Activated naive CD4-positive, alpha-beta T cell treated with anti-CD3 and anti-CD28 coated beads for 36 hours (primary cell): ENCODE measurements at regions of chr4 and their contacts with region 1.

Region 1: DNA sequence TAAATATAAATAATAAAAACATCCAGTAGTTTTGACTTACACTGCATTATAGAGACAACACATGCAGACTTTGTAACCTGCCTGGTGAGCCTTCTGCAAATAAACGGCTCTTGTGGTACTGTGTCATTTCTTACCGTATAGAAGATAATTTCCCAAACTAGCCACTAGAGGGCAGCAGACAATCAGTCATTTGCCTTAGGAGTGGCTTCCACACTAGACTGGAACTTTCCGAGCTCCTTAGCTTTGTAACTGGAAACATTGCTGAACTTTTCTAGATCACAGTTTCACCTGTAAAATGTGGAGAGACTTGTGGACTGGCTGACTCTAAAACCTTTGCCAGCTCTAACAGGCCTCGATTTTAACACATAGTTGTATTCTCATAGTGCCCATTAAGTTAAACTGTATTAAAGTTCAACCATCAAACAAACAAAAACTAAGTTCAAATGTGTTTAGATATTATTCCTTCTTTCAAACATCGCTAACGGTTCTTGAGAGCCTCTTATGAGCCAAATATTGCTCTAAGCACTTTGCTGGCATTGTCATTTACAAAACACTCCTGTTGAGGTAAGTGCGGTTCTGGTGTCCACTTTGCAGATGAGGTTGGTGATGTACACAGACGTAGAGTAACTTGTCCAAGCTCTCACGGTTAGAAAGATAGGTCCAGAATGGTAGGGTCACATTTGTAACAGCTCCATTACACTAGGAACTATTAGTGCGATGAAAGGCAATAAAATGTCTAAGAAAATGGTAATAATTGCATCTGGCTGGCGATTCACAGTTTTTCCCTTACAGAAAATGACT is 345.5 kb downstream of the ANK2 start:
- DNase-seq: peak; percentile 70
- H3K4me3 Mint-ChIP-seq: no peak overlapping the region
- H3K27ac Mint-ChIP-seq: no peak overlapping the region
- H3K4me1 Mint-ChIP-seq: no peaks in the 10 kb centered on the region
- H3K27me3 Mint-ChIP-seq: peaks cover 1% of the 10 kb centered on the region

Region 2: GRCh38 chr4:113049421-113050372 is 345.2 kb before region 1 on chr4 and contains the start of gene ANK2:
- CTCF ChIA-PET with region 1: no interaction called
- intact Hi-C with region 1: no loop called
- DNase-seq: no peak
- H3K4me3 Mint-ChIP-seq: no peak within 1 kb of the TSS
- H3K27ac Mint-ChIP-seq: no peak within 1 kb of the TSS
- H3K4me1 Mint-ChIP-seq: no peaks in the 10 kb centered on the region
- H3K27me3 Mint-ChIP-seq: peaks cover 8% of the 10 kb centered on the region
- total RNA-seq, gene ANK2: 2.7 to 3.0 TPM

Region 3: DNA sequence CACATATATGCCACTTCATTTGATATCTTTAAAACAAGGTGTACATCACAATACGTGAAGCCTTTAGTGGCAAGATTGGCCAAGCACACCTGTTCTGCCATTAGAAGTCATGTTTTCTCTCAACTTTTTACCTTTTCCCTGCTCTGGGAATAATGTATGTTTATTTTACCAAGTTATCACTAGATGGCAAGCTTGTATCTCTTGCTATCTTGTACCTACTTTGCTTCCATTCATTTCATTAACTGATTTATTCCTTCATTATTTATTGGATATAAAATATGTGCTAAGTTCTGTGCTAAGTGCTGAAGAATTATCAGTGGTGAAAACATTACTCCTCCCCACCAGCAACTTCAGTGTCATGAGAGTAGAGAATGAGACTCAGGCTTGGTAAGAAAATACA is 100.0 kb before region 1 on chr4:
- CTCF ChIA-PET with region 1: no interaction called
- intact Hi-C with region 1: loop called (anchors 5 kb)
- DNase-seq: no peak
- H3K4me3 Mint-ChIP-seq: no peak overlapping the region
- H3K27ac Mint-ChIP-seq: no peak overlapping the region
- H3K4me1 Mint-ChIP-seq: no peaks in the 10 kb centered on the region
- H3K27me3 Mint-ChIP-seq: peaks cover 12% of the 10 kb centered on the region

Region 4: DNA sequence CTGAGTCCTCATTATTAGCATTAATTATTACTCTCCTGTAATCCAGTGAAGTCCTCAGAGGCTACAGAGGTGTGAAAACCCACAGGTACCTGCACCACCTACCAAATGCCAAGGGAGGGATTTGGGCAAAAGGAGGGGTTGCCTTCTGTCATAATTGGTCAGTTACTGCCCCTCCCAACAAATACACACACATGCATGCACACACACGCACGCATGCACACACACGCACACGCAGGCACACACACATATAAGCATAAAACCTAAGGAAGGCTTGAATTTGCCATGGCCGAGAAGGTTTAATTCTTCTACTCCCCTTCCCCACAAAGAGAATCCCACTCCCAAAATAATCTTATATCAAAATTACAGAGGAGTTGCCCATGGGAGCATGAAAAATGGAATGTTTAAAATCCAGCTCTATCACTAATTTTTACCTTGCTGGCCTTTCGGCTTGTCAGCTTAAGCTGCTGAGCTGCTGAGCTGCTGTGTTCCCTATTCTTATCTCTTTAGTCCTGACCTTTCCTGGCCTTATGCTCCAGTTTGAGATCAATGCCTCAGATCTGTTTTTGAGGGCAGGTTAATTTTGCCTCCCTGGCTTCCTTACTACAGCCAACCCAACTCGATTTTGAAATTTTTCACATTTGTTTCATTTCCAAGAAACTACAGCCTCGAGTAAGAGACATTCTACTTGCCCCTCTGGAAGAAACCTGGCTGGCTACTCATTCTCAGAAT is 271.6 kb after region 1 on chr4:
- CTCF ChIA-PET with region 1: no interaction called
- intact Hi-C with region 1: no loop called
- DNase-seq: no peak
- H3K4me3 Mint-ChIP-seq: no peak overlapping the region
- H3K27ac Mint-ChIP-seq: no peak overlapping the region
- H3K4me1 Mint-ChIP-seq: peaks cover 6% of the 10 kb centered on the region
- H3K27me3 Mint-ChIP-seq: no peaks in the 10 kb centered on the region

Region 5: GRCh38 chr4:113823291-113823659 is 428.3 kb after region 1 on chr4:
- CTCF ChIA-PET with region 1: interaction called, 3 read pairs
- intact Hi-C with region 1: loop called (anchors 2 kb)
- DNase-seq: no peak
- H3K4me3 Mint-ChIP-seq: no peak overlapping the region
- H3K27ac Mint-ChIP-seq: no peak overlapping the region
- H3K4me1 Mint-ChIP-seq: peaks cover 66% of the 10 kb centered on the region
- H3K27me3 Mint-ChIP-seq: no peaks in the 10 kb centered on the region

Region 6: DNA sequence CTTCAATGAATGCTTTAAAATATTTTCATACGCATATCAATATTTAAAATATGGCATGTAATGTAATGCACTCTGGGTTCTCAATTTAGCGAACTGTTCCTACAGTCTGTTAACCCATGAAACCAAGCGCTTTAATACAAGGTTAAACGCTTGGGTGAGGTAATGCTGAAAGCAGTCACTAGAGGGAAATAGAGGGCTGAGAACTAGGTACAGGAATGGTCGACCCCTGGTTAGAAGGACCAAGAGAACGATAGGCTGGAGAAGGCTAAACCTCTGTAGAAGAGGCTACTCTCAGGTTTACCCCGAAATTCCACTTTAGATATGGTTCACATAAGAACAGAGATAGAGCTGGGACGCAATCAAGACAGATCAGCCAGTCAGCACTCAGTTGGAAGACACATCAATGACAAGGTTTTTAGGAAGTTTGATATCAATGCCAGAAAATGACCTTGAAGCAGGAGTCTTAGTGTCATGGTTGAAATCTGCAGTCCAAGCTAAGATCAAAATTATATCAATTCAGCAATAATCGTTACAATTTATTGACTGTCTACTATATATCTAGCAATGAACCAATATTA is 557.6 kb after region 1 on chr4:
- CTCF ChIA-PET with region 1: interaction called, 3 read pairs
- intact Hi-C with region 1: loop called (anchors 2 kb)
- DNase-seq: peak; percentile 27
- H3K4me3 Mint-ChIP-seq: no peak overlapping the region
- H3K27ac Mint-ChIP-seq: no peak overlapping the region
- H3K4me1 Mint-ChIP-seq: peaks cover 8% of the 10 kb centered on the region
- H3K27me3 Mint-ChIP-seq: no peaks in the 10 kb centered on the region

Region 7: DNA sequence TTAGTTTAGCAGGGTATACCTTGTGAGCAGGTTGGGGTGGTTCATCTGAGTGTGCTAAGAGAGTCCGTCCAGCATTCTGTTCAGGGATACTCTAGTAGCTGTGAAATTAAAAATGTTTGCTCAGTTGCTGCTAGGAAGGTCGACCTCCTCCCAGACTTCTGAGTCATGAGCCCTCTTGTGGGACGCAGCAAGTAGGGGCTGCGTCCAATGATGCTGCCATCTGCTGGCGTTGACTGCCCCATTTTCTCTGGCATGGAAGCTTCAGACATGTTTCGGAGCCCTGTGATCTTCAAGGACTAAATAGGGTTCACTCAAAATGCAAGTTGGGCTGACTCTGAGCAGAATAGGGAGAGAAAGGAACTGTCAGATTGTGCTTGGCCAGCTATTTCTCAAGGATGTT is 785.6 kb after region 1 on chr4:
- CTCF ChIA-PET with region 1: interaction called, 4 read pairs
- intact Hi-C with region 1: loop called (anchors 1 kb)
- DNase-seq: peak; percentile 56
- H3K4me3 Mint-ChIP-seq: no peak overlapping the region
- H3K27ac Mint-ChIP-seq: no peak overlapping the region
- H3K4me1 Mint-ChIP-seq: no peaks in the 10 kb centered on the region
- H3K27me3 Mint-ChIP-seq: no peaks in the 10 kb centered on the region

Region 8: GRCh38 chr4:114659386-114660008 is 1264.6 kb after region 1 on chr4:
- CTCF ChIA-PET with region 1: no interaction called
- intact Hi-C with region 1: loop called (anchors 2 kb)
- DNase-seq: peak; percentile 63
- H3K4me3 Mint-ChIP-seq: no peak overlapping the region
- H3K27ac Mint-ChIP-seq: no peak overlapping the region
- H3K4me1 Mint-ChIP-seq: no peaks in the 10 kb centered on the region
- H3K27me3 Mint-ChIP-seq: peaks cover 17% of the 10 kb centered on the region